Tibial artery (tissue), 4 donors: ENCODE measurements at regions of chr12 and their contacts with region 1.

Region 1: GRCh38 chr12:32671930-32672780 is 6.9 kb upstream of the DNM1L start:
- DNase-seq: peak in 1 of 2 donors; percentile 4
- H3K4me3 ChIP-seq: no peak overlapping the region
- H3K27ac ChIP-seq: no peak overlapping the region
- H3K4me1 ChIP-seq: no peaks in the 10 kb centered on the region
- H3K27me3 ChIP-seq: no peaks in the 10 kb centered on the region
- CTCF ChIP-seq: peak; percentile 41 to 51

Region 2: GRCh38 chr12:32365473-32366064 is 306.6 kb before region 1 on chr12:
- intact Hi-C with region 1: loop called (anchors 2 kb)
- DNase-seq: peak in 1 of 2 donors; percentile 37
- H3K4me3 ChIP-seq: no peak overlapping the region
- H3K27ac ChIP-seq: no peak overlapping the region
- H3K4me1 ChIP-seq: no peaks in the 10 kb centered on the region
- H3K27me3 ChIP-seq: no peaks in the 10 kb centered on the region
- CTCF ChIP-seq: peak; percentile 70 to 78

Region 3: GRCh38 chr12:32595251-32595650 is 76.9 kb before region 1 on chr12:
- intact Hi-C with region 1: no loop called
- DNase-seq: no peak
- H3K4me3 ChIP-seq: no peak overlapping the region
- H3K27ac ChIP-seq: no peak overlapping the region
- H3K4me1 ChIP-seq: no peaks in the 10 kb centered on the region
- H3K27me3 ChIP-seq: no peaks in the 10 kb centered on the region
- CTCF ChIP-seq: no peak

Region 4: DNA sequence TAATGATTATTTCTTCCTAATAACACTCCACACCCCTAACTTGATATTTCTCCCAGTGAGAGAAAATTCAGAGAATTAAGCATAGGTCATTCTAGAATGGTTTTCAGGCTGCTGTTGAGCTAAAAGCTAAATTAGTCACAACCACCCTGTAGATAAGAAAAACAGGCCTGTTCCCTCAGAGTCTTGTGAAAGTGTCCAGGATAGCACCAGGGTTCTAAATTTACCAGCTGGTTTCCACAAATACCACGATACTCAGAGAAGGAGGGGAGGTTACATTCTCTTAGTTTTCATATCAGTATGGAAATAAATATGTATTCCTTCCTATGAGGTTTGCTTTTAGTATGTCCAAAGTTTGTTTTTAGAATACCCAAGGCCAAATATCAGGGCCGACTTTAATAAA is 149.6 kb after region 1 on chr12:
- intact Hi-C with region 1: no loop called
- DNase-seq: no peak
- H3K4me3 ChIP-seq: no peak overlapping the region
- H3K27ac ChIP-seq: no peak overlapping the region
- H3K4me1 ChIP-seq: no peaks in the 10 kb centered on the region
- H3K27me3 ChIP-seq: no peaks in the 10 kb centered on the region
- CTCF ChIP-seq: no peak